K562 (cell line): ENCODE measurements at regions of chr1 and their contacts with region 1.

Region 1: DNA sequence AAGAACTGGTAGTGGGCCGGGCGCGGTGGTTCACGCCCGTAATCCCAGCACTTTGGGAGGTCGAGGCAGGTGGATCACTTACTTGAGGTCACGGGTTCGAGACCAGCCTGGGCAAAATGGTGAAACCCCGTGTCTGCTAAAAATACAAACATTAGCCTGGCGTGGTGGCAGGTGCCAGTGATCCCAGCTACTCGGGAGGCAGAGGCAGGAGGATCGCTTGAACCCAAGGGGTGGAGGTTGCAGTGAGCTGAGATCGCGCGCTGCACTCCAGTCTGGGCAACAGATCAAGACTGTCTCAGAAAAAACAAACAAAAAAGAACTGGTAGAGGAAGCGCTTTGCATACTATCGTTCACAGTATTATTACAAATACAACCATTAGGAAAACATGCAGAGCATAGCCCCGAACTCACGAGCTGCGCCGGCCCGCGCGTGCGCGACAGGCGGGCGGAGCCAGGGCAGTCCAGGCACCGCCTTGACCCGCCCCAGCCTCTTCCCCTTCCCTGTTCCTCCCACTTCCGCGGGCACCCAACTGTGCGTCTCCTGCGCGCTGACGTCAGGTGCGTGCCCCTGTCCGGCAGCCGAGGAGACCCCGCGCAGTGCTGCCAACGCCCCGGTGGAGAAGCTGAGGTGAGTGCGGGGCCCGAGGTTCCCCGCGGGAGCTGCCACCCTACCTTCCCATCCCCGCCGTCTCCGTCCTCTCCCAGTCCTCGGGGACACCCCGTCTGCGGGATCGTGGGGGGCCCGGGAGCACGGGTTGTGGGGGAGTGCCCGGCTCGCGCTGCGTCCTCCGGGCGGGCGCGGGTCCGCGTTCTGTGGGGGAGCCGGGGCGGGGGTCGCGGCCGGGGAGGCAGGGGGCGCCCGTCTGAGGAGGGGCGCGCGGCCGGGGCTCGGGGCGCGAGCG is at the start of gene CDC42:
- DNase-seq: peak; percentile 96 to 99 (median 98)
- ATAC-seq: peak; percentile 93
- H3K4me3 ChIP-seq: peak within 1 kb of the TSS; percentile 97
- H3K27ac ChIP-seq: peak within 1 kb of the TSS; percentile 96
- H3K4me1 ChIP-seq: peaks cover 33 to 35% of the 10 kb centered on the region in 2 experiments
- H3K27me3 ChIP-seq: no peaks in the 10 kb centered on the region
- CTCF ChIP-seq: no peak
- EP300 ChIP-seq: no peak; the same call in 1 of the 2 replicates
- POLR2A ChIP-seq: peak; percentile 96
- RAD21 ChIP-seq: peak in 1 of 2 experiments; percentile 2; a peak in 1 of 4 replicates
- polyA plus RNA-seq, gene CDC42: 230 to 325 TPM

Region 2: GRCh38 chr1:22039594-22040285 is 12.6 kb before region 1 on chr1:
- CTCF ChIA-PET with region 1: no interaction called
- POLR2A ChIA-PET with region 1: interaction called, 11 read pairs
- in situ Hi-C with region 1: no loop called
- intact Hi-C with region 1: no loop called
- DNase-seq: peak; percentile 37 to 91 (median 58)
- ATAC-seq: peak; percentile 96
- H3K4me3 ChIP-seq: no peak overlapping the region
- H3K27ac ChIP-seq: peak overlapping the region; percentile 74
- H3K4me1 ChIP-seq: peaks cover 31 to 43% of the 10 kb centered on the region in 2 experiments
- H3K27me3 ChIP-seq: no peaks in the 10 kb centered on the region
- CTCF ChIP-seq: no peak
- EP300 ChIP-seq: no peak
- POLR2A ChIP-seq: 0 out of 2 replicates have a peak, but pooled peaks have one; percentile 41
- RAD21 ChIP-seq: peak in 1 of 2 experiments; percentile 18; a peak in 1 of 4 replicates

Region 3: DNA sequence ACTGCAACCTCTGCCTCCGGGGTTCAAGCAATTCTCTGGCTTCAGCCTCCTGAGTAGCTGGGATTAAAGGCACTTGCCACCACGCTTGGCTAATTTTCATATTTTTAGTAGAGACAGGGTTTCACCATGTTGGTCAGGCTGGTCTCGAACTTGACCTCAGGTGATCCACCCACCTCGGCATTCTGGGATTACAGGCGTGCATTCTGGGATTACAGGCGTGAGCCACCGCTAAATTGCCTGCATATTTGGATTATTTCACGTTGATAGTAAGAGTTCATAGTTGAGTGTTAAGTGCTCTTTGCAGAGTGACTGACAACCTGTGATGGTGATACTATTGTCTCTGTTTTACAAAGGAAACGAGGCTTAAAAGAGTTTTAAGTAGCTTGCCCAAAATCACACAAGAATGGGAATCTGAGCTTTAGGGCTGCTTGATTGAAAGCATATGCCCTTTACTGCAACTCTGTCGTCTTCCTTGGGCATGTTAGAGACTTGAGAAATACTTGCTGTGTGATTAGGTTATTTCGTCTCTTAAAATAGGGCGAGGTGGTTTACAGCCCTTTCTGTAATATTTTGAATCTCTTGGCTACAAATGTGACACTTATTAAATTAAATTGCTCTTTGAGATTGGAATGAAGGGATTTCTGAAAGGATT is 12.5 kb after region 1 on chr1:
- CTCF ChIA-PET with region 1: no interaction called
- POLR2A ChIA-PET with region 1: interaction called, 47 read pairs
- in situ Hi-C with region 1: no loop called
- intact Hi-C with region 1: no loop called
- DNase-seq: no peak
- ATAC-seq: no peak
- H3K4me3 ChIP-seq: no peak overlapping the region
- H3K27ac ChIP-seq: no peak overlapping the region
- H3K4me1 ChIP-seq: peaks cover 0 to 2% of the 10 kb centered on the region in 2 experiments; a peak in 2 of 5 replicates
- H3K27me3 ChIP-seq: no peaks in the 10 kb centered on the region
- CTCF ChIP-seq: no peak
- EP300 ChIP-seq: no peak
- POLR2A ChIP-seq: no peak
- RAD21 ChIP-seq: no peak

Region 4: GRCh38 chr1:22075718-22076117 is 23.4 kb after region 1 on chr1:
- CTCF ChIA-PET with region 1: no interaction called
- POLR2A ChIA-PET with region 1: interaction called, 15 read pairs
- in situ Hi-C with region 1: no loop called
- intact Hi-C with region 1: no loop called
- DNase-seq: no peak
- ATAC-seq: peak; percentile 48
- H3K4me3 ChIP-seq: no peak overlapping the region
- H3K27ac ChIP-seq: peak overlapping the region; percentile 19; the same call in 1 of the 3 replicates
- H3K4me1 ChIP-seq: peaks cover 13 to 22% of the 10 kb centered on the region in 2 experiments
- H3K27me3 ChIP-seq: no peaks in the 10 kb centered on the region
- CTCF ChIP-seq: no peak
- EP300 ChIP-seq: no peak
- POLR2A ChIP-seq: no peak
- RAD21 ChIP-seq: no peak